Naive thymus-derived CD4-positive, alpha-beta T cell (primary cell): ENCODE measurements at regions of chr10 and their contacts with region 1.

Region 1: GRCh38 chr10:7260412-7260900 is 150.4 kb downstream of the SFMBT2 start:
- DNase-seq: peak in 3 of 9 donors; percentile 16 to 33 (median 31)
- ATAC-seq: peak; percentile 73
- H3K4me3 ChIP-seq: no peak overlapping the region
- H3K4me3 Mint-ChIP-seq: peak overlapping the region in 8 of 10 donors; percentile 29 to 75 (median 61)
- H3K27ac ChIP-seq: no peak overlapping the region
- H3K27ac Mint-ChIP-seq: peak overlapping the region; percentile 51 to 94 (median 86)
- H3K4me1 ChIP-seq: peaks cover 27 to 30% of the 10 kb centered on the region in 2 donors
- H3K4me1 Mint-ChIP-seq: peaks cover 42 to 64% (median 57%) of the 10 kb centered on the region in 7 donors
- H3K27me3 ChIP-seq: no peaks in the 10 kb centered on the region
- H3K27me3 Mint-ChIP-seq: no peaks in the 10 kb centered on the region

Region 2: DNA sequence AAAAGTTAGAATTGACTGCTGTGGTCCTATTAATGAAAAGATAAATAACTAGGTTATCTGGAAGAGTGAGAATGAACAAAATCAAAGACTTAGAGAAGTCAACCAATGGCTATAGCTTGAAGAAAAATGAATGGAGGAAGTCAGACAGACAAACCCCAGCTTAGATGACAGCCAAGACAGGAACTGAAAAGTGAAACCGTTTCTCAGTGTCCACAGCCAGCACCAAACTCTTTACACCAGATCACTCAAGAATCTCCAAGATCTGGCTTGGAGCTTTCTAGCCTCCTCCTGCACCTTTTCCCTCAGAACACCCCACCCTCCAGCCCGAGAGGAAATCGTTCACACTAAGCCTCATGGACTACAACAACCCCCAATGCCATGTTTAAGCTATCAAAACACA is 16.6 kb before region 1 on chr10:
- CTCF ChIA-PET with region 1: interaction called, 3 read pairs
- POLR2A ChIA-PET with region 1: no interaction called
- intact Hi-C with region 1: loop called in 1 of 2 experiments (anchors 2 kb)
- DNase-seq: peak in 1 of 9 donors; percentile 22
- ATAC-seq: peak; percentile 79
- H3K4me3 ChIP-seq: no peak overlapping the region
- H3K4me3 Mint-ChIP-seq: peak overlapping the region in 9 of 10 donors; percentile 9 to 80 (median 48)
- H3K27ac ChIP-seq: no peak overlapping the region
- H3K27ac Mint-ChIP-seq: peak overlapping the region; percentile 56 to 91 (median 77)
- H3K4me1 ChIP-seq: peaks cover 9 to 16% of the 10 kb centered on the region in 2 donors
- H3K4me1 Mint-ChIP-seq: peaks cover 30 to 65% (median 51%) of the 10 kb centered on the region in 7 donors
- H3K27me3 ChIP-seq: no peaks in the 10 kb centered on the region
- H3K27me3 Mint-ChIP-seq: no peaks in the 10 kb centered on the region

Region 3: DNA sequence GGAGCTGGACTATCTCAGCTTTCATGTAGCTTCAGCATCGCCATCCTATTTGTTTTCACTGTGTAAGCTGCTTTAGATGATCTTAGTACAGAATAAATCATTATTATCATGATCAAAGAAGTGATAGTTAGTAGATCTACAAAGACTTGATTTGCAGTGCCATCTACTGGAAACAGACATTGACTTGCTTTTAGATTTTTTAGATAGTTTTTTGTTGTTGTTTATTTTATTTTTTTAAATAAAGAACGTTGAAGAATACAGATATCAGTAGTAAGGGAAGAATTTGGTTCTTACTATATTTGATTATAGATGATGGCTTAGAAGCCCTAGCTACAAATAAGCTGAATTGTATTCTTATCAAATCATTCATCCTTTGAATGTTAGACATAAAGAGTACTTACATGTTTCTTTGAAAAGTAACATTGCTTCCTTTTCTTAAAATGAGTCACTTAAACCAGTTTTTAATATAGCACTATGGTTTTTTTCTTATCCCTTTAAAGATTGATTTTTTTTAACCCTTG is 156.7 kb after region 1 on chr10:
- CTCF ChIA-PET with region 1: interaction called, 6 read pairs
- POLR2A ChIA-PET with region 1: no interaction called
- intact Hi-C with region 1: loop called in 1 of 2 experiments (anchors 1 kb)
- DNase-seq: peak in 7 of 9 donors; percentile 36 to 62 (median 46)
- ATAC-seq: peak; percentile 69
- H3K4me3 ChIP-seq: no peak overlapping the region
- H3K4me3 Mint-ChIP-seq: no peak overlapping the region
- H3K27ac ChIP-seq: no peak overlapping the region
- H3K27ac Mint-ChIP-seq: peak overlapping the region in 3 of 9 donors; percentile 27 to 79 (median 29)
- H3K4me1 ChIP-seq: peaks cover 5 to 10% of the 10 kb centered on the region in 2 donors
- H3K4me1 Mint-ChIP-seq: peaks cover 8 to 35% (median 25%) of the 10 kb centered on the region in 7 donors
- H3K27me3 ChIP-seq: no peaks in the 10 kb centered on the region
- H3K27me3 Mint-ChIP-seq: peaks cover 0 to 33% (median 0%) of the 10 kb centered on the region in 5 donors

Region 4: GRCh38 chr10:7666253-7667081 is 406.0 kb after region 1 on chr10 and contains the start of gene ITIH5:
- CTCF ChIA-PET with region 1: no interaction called
- POLR2A ChIA-PET with region 1: no interaction called
- intact Hi-C with region 1: no loop called
- DNase-seq: peak in 4 of 9 donors; percentile 2 to 9 (median 3)
- ATAC-seq: no peak
- H3K4me3 ChIP-seq: peak within 1 kb of the TSS; percentile 2
- H3K4me3 Mint-ChIP-seq: peak within 1 kb of the TSS; percentile 65 to 91 (median 84)
- H3K27ac ChIP-seq: no peak within 1 kb of the TSS
- H3K27ac Mint-ChIP-seq: peak within 1 kb of the TSS in 2 of 9 donors; percentile 53 to 60
- H3K4me1 ChIP-seq: peaks cover 7 to 14% of the 10 kb centered on the region in 2 donors
- H3K4me1 Mint-ChIP-seq: peaks cover 6 to 23% (median 21%) of the 10 kb centered on the region in 7 donors
- H3K27me3 ChIP-seq: peaks cover 9 to 13% of the 10 kb centered on the region in 2 donors
- H3K27me3 Mint-ChIP-seq: peaks cover 52 to 74% (median 64%) of the 10 kb centered on the region in 5 donors
- total RNA-seq, gene ITIH5: not detected